ENCODE measurements at regions of chr16 and their contacts with region 1.

Region 1: GRCh38 chr16:19933740-19934139 is 49.1 kb upstream of the GPRC5B start:
- DNase-seq: no peak
- H3K4me3 ChIP-seq: no peak overlapping the region
- H3K4me3 Mint-ChIP-seq: no peak overlapping the region
- H3K27ac ChIP-seq: no peak overlapping the region
- H3K27ac Mint-ChIP-seq: no peak overlapping the region
- H3K4me1 ChIP-seq: no peaks in the 10 kb centered on the region
- H3K4me1 Mint-ChIP-seq: no peaks in the 10 kb centered on the region
- H3K27me3 ChIP-seq: no peaks in the 10 kb centered on the region
- H3K27me3 Mint-ChIP-seq: peaks cover 0 to 5% (median 5%) of the 10 kb centered on the region in 3 donors
- CTCF ChIP-seq: no peak

Region 2: DNA sequence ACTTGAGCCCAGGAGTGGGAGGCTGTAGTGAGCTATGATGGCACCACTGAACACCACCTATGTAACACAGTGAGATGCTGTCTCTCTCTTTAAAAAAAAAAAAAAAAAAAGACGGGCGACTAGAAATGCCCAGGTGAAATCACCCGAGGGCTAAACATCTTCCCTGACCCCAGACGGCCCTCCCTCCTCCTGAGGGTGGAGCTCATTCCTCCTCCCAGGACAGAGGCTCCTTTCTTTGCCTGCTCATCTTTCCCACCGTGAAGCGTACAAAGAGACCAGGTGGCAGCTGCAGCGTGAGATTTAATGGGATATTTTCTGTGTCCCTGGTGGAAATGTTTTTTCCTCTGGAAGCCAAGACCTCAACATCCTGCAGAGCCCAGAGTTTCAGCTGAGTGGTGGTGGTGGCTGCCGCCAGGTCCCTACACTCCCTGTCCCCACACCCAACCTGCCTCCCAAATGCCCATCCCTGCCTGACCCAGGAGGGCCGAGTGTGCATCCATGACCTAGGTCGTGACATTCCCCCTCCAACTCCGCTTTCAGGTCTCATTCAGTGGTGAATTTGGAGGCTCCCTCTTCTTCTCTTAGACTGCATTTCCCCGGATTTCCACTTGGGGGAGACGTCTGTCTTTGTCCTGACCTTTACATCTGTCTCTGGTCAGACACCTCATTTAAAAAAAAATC is 34.7 kb before region 1 on chr16:
- intact Hi-C with region 1: no loop called
- DNase-seq: peak in 1 of 3 donors; percentile 10
- H3K4me3 ChIP-seq: no peak overlapping the region
- H3K4me3 Mint-ChIP-seq: no peak overlapping the region
- H3K27ac ChIP-seq: no peak overlapping the region
- H3K27ac Mint-ChIP-seq: no peak overlapping the region
- H3K4me1 ChIP-seq: no peaks in the 10 kb centered on the region
- H3K4me1 Mint-ChIP-seq: no peaks in the 10 kb centered on the region
- H3K27me3 ChIP-seq: no peaks in the 10 kb centered on the region
- H3K27me3 Mint-ChIP-seq: peaks cover 2 to 12% (median 6%) of the 10 kb centered on the region in 3 donors
- CTCF ChIP-seq: peak; percentile 81

Region 3: DNA sequence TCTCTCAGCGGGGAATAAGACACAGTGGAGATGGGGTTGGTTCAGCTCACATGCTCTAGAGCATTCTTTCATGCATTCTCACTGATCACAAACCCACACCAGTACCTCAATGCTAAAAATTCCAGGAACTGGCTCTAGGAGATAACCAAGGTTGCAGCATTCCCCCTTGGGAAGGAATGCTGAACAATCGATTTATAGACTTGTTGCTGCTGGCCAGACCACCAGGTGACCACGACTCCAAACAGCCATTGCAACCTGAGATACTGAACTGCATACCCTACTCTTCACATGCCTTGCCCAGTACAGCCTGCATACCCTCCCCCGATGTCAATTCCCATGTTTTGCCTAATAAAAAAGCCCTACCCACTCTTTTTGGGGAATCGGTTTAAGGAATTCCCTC is 26.0 kb after region 1 on chr16:
- intact Hi-C with region 1: loop called in 1 of 2 experiments (anchors 1 kb)
- DNase-seq: no peak
- H3K4me3 ChIP-seq: no peak overlapping the region
- H3K4me3 Mint-ChIP-seq: peak overlapping the region in 1 of 2 donors; percentile 23
- H3K27ac ChIP-seq: no peak overlapping the region
- H3K27ac Mint-ChIP-seq: no peak overlapping the region
- H3K4me1 ChIP-seq: no peaks in the 10 kb centered on the region
- H3K4me1 Mint-ChIP-seq: no peaks in the 10 kb centered on the region
- H3K27me3 ChIP-seq: no peaks in the 10 kb centered on the region
- H3K27me3 Mint-ChIP-seq: peaks cover 0 to 3% (median 3%) of the 10 kb centered on the region in 3 donors
- CTCF ChIP-seq: no peak